CD8-positive, alpha-beta T cell (primary cell): ENCODE measurements at regions of chr22 and their contacts with region 1.

Region 1: DNA sequence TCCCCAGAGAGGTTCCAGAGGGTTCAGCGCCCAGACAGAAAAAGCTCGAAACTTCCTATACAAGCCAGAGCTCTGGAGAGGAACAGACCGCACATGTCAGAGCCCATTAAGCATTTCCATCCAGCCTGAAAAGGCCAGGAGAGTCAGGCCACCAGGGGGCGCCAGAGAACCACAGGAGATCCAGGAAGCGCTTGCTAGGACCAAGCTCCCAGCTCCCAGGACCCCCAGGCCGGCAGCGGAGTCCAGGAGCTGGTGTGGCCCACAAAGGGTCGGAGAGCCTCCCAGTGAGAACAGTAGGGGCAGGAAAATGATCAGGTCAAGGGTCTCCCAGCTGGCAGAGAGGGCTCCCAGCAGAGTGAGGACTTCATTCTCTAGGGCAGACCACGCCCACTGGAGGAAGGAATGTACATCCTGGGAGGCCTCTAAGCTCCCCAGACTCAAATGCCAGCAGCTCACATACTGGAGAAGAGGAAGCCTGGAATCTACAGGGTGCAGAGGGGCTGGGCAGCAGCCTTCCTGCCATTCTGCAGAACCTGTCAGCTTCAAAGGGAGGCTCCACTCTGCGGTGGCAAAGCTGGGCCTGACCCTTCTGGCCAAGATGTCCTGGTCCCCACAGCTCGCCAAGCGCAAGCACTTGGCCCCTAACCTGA is 2.1 kb upstream of the MEI1 start:
- DNase-seq: peak; percentile 78 to 98 (median 88)
- ATAC-seq: peak; percentile 81
- H3K4me3 ChIP-seq: no peak overlapping the region
- H3K4me3 Mint-ChIP-seq: peak overlapping the region; percentile 64
- H3K27ac ChIP-seq: no peak overlapping the region
- H3K27ac Mint-ChIP-seq: no peak overlapping the region
- H3K4me1 ChIP-seq: peaks cover 16% of the 10 kb centered on the region
- H3K4me1 Mint-ChIP-seq: peaks cover 10% of the 10 kb centered on the region
- H3K27me3 ChIP-seq: no peaks in the 10 kb centered on the region
- H3K27me3 Mint-ChIP-seq: no peaks in the 10 kb centered on the region
- CTCF ChIP-seq: peak; percentile 89

Region 2: DNA sequence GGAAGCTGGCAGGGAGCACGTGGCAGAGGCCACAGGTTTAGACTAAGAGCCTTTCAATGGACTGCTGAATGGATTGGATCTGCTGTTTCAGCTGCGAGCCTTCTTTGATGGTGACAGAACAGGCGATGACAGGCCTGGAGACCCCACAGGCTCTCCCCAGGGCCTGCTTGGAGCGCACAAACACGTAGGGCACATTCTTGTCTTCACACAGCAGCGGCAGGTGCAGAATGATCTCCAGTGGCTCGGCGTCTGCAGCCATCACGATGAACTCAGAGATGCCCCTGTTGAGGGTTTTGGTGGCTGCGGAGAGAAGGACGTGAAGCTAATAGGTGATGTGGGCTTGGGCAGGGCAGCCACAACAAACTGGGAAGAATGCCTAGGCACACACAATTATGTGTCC is 22.4 kb before region 1 on chr22:
- CTCF ChIA-PET with region 1: interaction called, 15 read pairs
- POLR2A ChIA-PET with region 1: no interaction called
- intact Hi-C with region 1: no loop called
- DNase-seq: no peak
- ATAC-seq: no peak
- H3K4me3 ChIP-seq: no peak overlapping the region
- H3K4me3 Mint-ChIP-seq: no peak overlapping the region
- H3K27ac ChIP-seq: no peak overlapping the region
- H3K27ac Mint-ChIP-seq: peak overlapping the region; percentile 29
- H3K4me1 ChIP-seq: no peaks in the 10 kb centered on the region
- H3K4me1 Mint-ChIP-seq: peaks cover 26% of the 10 kb centered on the region
- H3K27me3 ChIP-seq: no peaks in the 10 kb centered on the region
- H3K27me3 Mint-ChIP-seq: no peaks in the 10 kb centered on the region
- CTCF ChIP-seq: no peak

Region 3: DNA sequence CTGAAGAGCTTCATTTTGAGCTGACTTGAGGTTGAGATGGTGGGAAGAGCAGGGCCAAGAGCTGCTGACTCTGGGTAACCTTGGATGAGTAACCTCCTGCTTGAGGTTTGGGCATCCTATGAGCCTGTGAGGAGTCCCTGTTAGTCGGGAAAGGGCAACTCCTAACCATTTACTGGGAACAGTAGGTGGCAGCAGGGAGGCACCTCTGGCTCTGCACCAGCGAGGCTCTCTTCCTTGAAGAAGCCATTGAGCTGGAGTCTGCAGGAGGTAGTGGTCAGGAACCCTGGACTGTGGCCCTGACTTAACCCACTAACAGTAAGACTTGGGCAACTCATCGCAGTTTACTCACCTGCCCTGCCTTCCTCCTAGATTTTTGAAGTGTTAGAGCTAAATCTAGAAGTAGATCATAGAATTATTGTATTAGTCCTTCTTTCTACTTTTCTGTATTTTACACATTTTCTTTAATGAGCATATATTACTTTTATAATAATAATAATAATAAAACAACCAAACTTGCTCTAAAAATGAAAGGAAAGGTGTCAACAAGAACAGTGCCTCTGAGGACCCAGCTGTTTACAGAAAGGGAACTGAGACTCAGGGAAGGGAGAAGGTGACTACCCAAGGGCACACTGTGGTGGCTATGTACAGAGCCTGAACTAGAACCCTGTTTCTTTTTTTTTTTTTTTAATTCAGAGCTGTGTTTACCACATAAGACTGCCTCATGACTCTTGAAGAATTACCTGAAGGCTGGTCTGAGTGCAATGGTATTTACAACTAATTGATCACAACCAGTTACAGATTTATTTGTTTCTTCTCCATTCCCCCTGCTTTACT is 49.5 kb after region 1 on chr22:
- CTCF ChIA-PET with region 1: interaction called, 14 read pairs
- POLR2A ChIA-PET with region 1: no interaction called
- intact Hi-C with region 1: no loop called
- DNase-seq: peak; percentile 3 to 78 (median 55)
- ATAC-seq: peak; percentile 71
- H3K4me3 ChIP-seq: no peak overlapping the region
- H3K4me3 Mint-ChIP-seq: no peak overlapping the region
- H3K27ac ChIP-seq: no peak overlapping the region
- H3K27ac Mint-ChIP-seq: no peak overlapping the region
- H3K4me1 ChIP-seq: no peaks in the 10 kb centered on the region
- H3K4me1 Mint-ChIP-seq: peaks cover 4% of the 10 kb centered on the region
- H3K27me3 ChIP-seq: no peaks in the 10 kb centered on the region
- H3K27me3 Mint-ChIP-seq: peaks cover 13% of the 10 kb centered on the region
- CTCF ChIP-seq: peak; percentile 43

Region 4: DNA sequence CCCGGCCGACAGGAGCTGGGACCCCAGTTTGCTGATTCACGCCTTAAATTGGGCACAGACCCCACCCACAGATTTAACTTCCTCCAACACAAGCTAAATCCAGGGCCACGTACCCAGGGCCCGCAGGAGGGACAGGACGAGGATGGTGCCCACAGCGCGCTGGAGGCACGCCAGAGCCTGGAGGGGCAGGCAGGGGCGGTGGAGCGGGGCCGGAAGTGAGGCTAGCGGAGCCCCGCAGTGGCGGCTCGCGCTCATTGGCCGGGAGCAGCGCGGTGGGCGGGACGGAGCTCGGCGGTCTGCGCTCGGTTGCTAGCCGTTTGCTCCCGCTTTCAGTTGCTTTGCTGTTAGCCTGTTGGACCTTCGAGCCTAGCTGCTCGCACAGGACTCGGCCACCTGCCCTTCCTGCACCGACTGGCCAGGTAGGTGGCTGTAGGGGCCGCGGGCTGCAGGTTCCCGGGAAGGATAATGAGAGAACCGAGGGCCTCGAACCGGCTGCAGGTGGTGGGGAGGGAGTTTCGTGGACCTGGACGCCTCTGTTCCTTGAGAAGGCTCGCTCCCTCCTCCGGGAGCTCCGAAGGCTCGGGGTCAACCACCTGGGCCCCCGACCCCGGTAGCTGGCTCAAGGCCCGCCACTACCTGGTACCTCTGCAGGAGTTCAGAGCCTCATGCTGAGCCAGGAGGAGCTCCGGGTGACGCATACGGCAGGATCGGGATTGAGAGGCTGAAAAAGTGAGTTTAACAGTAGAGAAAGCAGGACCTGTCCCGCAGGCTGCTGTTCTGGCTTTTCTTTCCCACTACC is 103.3 kb after region 1 on chr22 and contains the start of gene CCDC134:
- CTCF ChIA-PET with region 1: interaction called, 22 read pairs
- POLR2A ChIA-PET with region 1: interaction called, 7 read pairs
- intact Hi-C with region 1: loop called in 1 of 2 experiments (anchors 5 kb)
- DNase-seq: peak; percentile 82 to 95 (median 92)
- ATAC-seq: peak; percentile 96
- H3K4me3 ChIP-seq: peak within 1 kb of the TSS; percentile 97 to 99
- H3K4me3 Mint-ChIP-seq: peak within 1 kb of the TSS; percentile 93
- H3K27ac ChIP-seq: peak within 1 kb of the TSS; percentile 90 to 92
- H3K27ac Mint-ChIP-seq: peak within 1 kb of the TSS; percentile 98
- H3K4me1 ChIP-seq: peaks cover 22% of the 10 kb centered on the region
- H3K4me1 Mint-ChIP-seq: peaks cover 38% of the 10 kb centered on the region
- H3K27me3 ChIP-seq: no peaks in the 10 kb centered on the region
- H3K27me3 Mint-ChIP-seq: no peaks in the 10 kb centered on the region
- CTCF ChIP-seq: no peak
- total RNA-seq, gene CCDC134: 19.1 to 22.5 TPM

Region 5: DNA sequence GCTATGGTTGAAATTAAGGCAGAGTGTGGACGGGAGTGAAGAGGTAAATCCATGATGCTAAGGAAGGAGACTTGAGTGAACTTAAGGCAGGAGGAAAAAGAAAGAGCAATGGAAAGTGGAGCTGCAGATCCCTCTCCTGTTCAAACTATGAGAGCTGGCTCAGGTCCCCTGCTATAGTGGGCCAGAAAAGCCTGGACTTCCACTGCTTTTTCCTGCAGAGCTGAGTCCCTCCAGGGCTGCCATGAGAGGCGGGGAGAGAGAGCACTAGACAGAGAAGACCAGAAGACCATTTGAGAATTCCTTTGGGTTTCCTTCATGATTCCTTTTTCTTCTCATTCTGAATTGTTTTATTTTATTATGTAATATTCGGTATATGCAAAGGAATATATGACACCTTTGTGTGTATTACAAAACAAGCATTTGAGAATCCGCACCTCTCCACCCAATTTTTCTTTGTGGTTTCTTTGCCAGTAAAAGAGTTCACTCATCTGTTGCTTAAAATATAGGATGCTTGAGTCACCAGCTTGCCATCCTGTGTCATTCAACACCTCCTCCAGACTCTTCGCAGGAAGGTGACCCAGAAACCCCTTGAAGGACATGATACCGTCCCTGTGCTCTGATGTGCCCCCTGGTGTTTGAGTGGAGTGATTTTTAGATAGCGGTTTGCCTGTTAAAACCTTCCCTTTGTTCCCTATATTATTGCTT is 160.1 kb after region 1 on chr22:
- CTCF ChIA-PET with region 1: interaction called, 29 read pairs
- POLR2A ChIA-PET with region 1: interaction called, 5 read pairs
- intact Hi-C with region 1: loop called (anchors 1 to 2 kb)
- DNase-seq: peak; percentile 31 to 91 (median 72)
- ATAC-seq: peak; percentile 70
- H3K4me3 ChIP-seq: no peak overlapping the region
- H3K4me3 Mint-ChIP-seq: no peak overlapping the region
- H3K27ac ChIP-seq: peak overlapping the region; percentile 20 to 67
- H3K27ac Mint-ChIP-seq: peak overlapping the region; percentile 84
- H3K4me1 ChIP-seq: peaks cover 30% of the 10 kb centered on the region
- H3K4me1 Mint-ChIP-seq: peaks cover 59% of the 10 kb centered on the region
- H3K27me3 ChIP-seq: no peaks in the 10 kb centered on the region
- H3K27me3 Mint-ChIP-seq: no peaks in the 10 kb centered on the region
- CTCF ChIP-seq: peak; percentile 76

Region 6: GRCh38 chr22:41946629-41947423 is 249.6 kb after region 1 on chr22 and contains the start of gene CENPM:
- CTCF ChIA-PET with region 1: interaction called, 88 read pairs
- POLR2A ChIA-PET with region 1: no interaction called
- intact Hi-C with region 1: no loop called
- DNase-seq: peak; percentile 65 to 89 (median 84)
- ATAC-seq: peak; percentile 94
- H3K4me3 ChIP-seq: peak within 1 kb of the TSS; percentile 75 to 87
- H3K4me3 Mint-ChIP-seq: peak within 1 kb of the TSS; percentile 91
- H3K27ac ChIP-seq: peak within 1 kb of the TSS in 1 of 2 experiments; percentile 4
- H3K27ac Mint-ChIP-seq: no peak within 1 kb of the TSS
- H3K4me1 ChIP-seq: peaks cover 19% of the 10 kb centered on the region
- H3K4me1 Mint-ChIP-seq: peaks cover 13% of the 10 kb centered on the region
- H3K27me3 ChIP-seq: peaks cover 0 to 2% of the 10 kb centered on the region in 2 experiments
- H3K27me3 Mint-ChIP-seq: no peaks in the 10 kb centered on the region
- CTCF ChIP-seq: no peak
- total RNA-seq, gene CENPM: 9.4 to 10.9 TPM

Region 7: DNA sequence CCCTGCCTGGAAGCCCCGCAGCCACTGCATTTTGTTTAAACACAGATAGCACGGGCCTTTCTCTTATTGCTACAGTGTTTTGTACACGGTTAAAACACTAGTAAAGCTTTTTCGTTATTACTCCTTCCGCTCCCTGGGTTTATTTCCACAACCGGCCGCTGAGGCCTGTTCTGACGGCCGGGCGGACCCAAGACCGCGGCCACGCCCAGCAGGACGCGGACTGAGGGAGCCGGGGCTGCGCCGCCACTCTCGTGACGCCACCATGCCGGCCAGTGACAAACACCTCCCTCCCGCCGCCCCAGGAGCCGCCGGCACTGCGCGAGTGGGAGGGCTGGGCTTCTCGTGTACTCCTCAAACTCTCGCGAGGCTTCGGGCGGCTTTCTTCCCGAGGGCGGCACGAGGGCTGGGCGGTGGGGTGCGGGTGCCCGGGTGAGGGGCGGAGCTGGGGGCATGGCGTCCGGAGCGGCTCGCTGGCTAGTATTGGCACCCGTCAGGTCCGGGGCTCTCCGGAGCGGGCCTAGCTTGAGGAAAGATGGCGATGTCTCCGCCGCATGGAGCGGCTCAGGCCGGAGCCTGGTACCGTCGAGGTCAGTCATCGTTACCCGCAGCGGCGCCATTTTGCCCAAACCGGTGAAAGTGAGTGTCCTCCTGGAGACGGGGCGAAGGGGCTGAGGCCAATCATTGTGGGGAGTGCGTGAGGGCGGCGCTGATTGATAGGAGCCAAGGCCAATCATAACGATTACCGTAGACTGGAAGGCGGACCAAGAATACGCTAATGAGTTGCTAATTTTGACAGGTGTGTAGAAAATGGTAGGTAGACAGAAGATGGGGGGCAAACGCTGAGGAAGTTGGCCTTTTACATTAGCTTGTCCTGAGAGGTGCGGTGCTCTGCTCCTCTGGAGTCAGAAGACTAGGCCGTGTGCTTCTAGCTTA is 382.3 kb after region 1 on chr22 and contains the start of gene SMDT1:
- CTCF ChIA-PET with region 1: no interaction called
- POLR2A ChIA-PET with region 1: no interaction called
- intact Hi-C with region 1: loop called in 1 of 2 experiments (anchors 10 kb)
- DNase-seq: peak; percentile 95 to 99 (median 98)
- ATAC-seq: peak; percentile 92
- H3K4me3 ChIP-seq: peak within 1 kb of the TSS; percentile 79 to 80
- H3K4me3 Mint-ChIP-seq: peak within 1 kb of the TSS; percentile 93
- H3K27ac ChIP-seq: peak within 1 kb of the TSS; percentile 89 to 97
- H3K27ac Mint-ChIP-seq: peak within 1 kb of the TSS; percentile 98
- H3K4me1 ChIP-seq: peaks cover 21% of the 10 kb centered on the region
- H3K4me1 Mint-ChIP-seq: peaks cover 36% of the 10 kb centered on the region
- H3K27me3 ChIP-seq: no peaks in the 10 kb centered on the region
- H3K27me3 Mint-ChIP-seq: no peaks in the 10 kb centered on the region
- CTCF ChIP-seq: no peak
- total RNA-seq, gene SMDT1: 30.4 to 34.5 TPM